RWPE1 (cell line): ENCODE measurements at regions of chr4 and their contacts with region 1.

Region 1: GRCh38 chr4:121696581-121697461 is at the start of gene ANXA5:
- DNase-seq: peak; percentile 84
- H3K27ac ChIP-seq: peak within 1 kb of the TSS; percentile 95
- CTCF ChIP-seq: peak; percentile 49

Region 2: DNA sequence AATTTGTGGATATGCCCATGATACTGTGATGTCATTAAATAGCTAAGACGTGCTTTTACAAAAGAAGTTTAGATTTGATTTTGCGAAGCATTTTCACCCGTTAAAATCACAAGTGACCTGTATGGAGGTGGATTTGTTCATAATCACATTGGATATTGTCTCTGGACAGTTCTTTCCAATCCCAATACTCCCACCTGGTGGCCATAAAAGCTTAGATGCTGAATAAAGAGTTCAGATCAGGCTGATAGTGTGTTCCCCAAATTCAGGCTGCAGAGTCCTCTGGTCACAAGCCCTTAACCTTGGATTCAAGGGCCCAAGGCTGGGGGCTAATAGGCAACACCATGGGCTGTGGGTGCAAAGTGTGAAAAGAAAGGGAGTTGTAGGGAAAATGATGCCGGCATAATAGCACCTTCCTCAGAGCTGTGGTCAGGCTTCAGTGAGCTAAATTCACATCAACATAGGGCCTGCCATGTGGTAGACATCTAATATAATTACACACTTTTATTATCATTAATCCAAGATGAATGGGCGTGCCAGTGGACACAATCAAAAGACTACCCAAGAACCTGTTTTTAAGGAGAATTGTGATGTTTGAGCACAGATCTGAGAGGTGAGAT is 40.0 kb after region 1 on chr4:
- CTCF ChIA-PET with region 1: interaction called, 10 read pairs
- POLR2A ChIA-PET with region 1: no interaction called
- DNase-seq: peak; percentile 67
- H3K27ac ChIP-seq: no peak overlapping the region
- CTCF ChIP-seq: peak; percentile 66